ENCODE measurements at regions of chr16 and their contacts with region 1.

Region 1: GRCh38 chr16:57235128-57236021 is 9.7 kb upstream of the ARL2BP start:
- DNase-seq: no peak
- H3K4me3 Mint-ChIP-seq: no peak overlapping the region
- H3K27ac Mint-ChIP-seq: no peak overlapping the region
- H3K4me1 Mint-ChIP-seq: no peaks in the 10 kb centered on the region
- H3K27me3 Mint-ChIP-seq: no peaks in the 10 kb centered on the region
- CTCF ChIP-seq: no peak

Region 2: GRCh38 chr16:57224651-57225335 is 10.6 kb before region 1 on chr16:
- CTCF ChIA-PET with region 1: no interaction called
- intact Hi-C with region 1: loop called (anchors 2 kb)
- DNase-seq: no peak
- H3K4me3 Mint-ChIP-seq: no peak overlapping the region
- H3K27ac Mint-ChIP-seq: no peak overlapping the region
- H3K4me1 Mint-ChIP-seq: no peaks in the 10 kb centered on the region
- H3K27me3 Mint-ChIP-seq: no peaks in the 10 kb centered on the region
- CTCF ChIP-seq: no peak